ENCODE measurements at regions of chrX and their contacts with region 1.

Region 1: GRCh38 chrX:45070116-45071007 is 130.3 kb downstream of the DIPK2B start:
- DNase-seq: no peak

Region 2: GRCh38 chrX:44884944-44885343 is 185.4 kb before region 1 on chrX:
- intact Hi-C with region 1: no loop called
- DNase-seq: no peak

Region 3: GRCh38 chrX:44922980-44923379 is 147.4 kb before region 1 on chrX:
- intact Hi-C with region 1: no loop called
- DNase-seq: no peak

Region 4: DNA sequence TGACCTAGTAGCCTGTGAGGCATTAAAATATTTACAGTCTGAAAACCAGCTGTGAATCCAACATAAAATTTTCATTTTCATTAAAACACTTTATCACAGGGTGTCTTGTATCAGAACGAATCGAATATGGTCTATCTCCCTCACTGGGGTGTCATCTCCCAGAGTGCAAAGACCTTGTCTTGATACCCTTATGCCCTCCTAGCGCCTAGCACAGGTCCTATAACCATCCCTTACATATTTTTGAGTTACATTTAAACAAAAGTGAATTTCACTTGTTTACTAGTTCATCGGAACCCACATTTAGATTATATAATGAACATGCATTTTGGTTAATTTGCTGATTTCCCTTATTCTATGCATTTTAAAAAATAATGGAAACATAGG is 116.3 kb after region 1 on chrX:
- intact Hi-C with region 1: loop called (anchors 5 kb)
- DNase-seq: no peak